ENCODE measurements at regions of chr1 and their contacts with region 1.

Region 1: DNA sequence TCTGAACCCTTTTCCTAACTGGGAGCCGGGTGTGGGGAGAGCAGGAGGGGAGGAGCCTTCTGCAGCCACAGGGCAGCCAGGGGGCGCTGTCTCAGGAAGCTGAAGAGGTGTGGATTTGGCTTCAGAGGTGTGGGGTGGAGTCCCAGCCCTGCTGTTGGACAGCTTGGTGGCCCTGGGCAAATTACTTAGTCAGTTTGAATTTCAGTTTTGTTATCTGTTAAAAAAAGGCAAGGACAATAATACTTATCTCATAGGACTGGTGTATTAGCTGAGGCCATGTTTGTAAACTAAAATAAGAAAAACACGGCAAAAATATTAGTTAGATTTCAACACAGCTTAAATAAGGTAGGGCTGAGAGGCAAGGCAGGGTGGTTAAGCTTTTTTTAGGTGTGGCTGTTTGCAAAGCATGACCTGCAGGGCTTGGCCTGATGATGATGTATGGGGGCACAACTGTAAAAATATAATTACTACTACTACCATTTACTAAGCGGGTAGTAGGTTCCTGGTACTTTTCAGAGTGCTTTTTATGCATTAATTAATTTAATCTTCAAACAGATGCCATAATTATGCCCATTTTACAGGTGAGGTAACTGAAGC is 111.8 kb downstream of the PLXNA2 start:
- H3K4me3 ChIP-seq: no peak overlapping the region
- H3K27ac ChIP-seq: no peak overlapping the region
- H3K4me1 ChIP-seq: peaks cover 20% of the 10 kb centered on the region
- CTCF ChIP-seq: peak; percentile 83

Region 2: DNA sequence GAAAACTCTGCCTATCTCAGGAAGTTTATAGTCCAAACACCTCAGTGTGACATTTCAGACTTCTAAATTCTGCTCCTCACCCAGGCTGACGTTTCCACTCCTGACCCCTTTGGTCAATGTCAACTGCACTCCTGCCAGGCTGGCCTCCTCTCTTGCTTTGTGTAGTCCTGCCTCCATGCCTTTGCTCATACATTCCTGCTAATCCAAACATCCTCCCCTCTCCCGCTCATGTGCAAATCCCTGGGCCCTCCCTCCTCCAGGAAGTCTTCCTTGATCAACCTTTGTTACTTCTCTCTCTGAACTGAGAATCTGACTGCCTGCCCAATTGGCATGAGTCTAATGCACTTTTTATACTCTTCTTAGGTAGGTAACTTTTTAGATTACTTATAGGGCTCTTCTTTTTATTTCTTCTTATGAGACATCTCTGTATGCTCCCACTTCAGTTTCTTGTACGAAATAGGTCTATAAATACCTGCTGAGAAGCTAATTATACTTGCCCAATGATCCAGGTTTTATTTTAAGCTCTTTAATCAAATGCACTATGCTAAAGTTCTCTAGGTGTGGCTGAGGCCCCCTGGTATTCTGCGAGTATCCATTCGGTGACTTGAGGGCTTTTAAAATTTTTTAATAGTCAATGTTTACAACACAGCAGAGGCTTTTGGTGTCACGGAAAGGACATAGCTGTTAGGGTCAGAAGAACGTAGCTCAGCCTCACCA is 16.3 kb before region 1 on chr1:
- CTCF ChIA-PET with region 1: interaction called, 46 read pairs
- POLR2A ChIA-PET with region 1: no interaction called
- H3K4me3 ChIP-seq: no peak overlapping the region
- H3K27ac ChIP-seq: no peak overlapping the region
- H3K4me1 ChIP-seq: no peaks in the 10 kb centered on the region
- CTCF ChIP-seq: no peak

Region 3: DNA sequence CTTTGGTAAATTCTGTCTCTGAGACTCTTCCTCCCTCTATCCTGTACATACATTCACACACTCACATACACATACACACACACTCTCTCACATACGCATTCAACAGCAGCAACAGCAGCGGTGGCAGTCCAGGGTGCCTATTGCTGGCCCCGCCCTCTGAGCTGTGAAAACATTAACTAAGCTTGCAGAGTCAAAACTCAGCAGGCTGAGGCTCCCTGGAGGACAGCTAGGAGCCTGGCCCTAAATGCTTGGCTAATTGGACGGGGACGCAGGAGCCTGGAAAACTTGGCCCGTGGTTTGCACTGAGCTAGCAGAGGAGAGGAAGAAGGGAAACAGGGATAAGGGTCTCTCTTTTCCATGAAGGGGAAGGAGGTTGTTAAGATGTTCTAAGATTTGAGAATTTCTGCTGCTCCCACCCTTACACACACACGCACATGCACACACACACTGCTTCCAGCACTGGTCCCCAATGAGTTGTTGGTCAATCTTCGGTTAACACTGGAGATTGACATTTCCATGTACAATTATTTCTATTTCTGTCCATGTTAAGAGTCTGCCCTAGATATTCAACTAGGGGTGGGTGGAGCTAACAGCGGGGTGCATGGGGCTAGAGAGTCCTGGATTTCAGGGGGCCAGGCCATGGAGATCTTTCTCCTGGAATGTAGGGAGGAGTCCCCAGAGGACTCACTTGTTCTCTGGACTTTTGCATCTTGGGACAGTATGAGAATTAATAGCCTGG is 17.6 kb after region 1 on chr1:
- CTCF ChIA-PET with region 1: interaction called, 22 read pairs
- POLR2A ChIA-PET with region 1: no interaction called
- H3K4me3 ChIP-seq: no peak overlapping the region
- H3K27ac ChIP-seq: no peak overlapping the region; the same call in 1 of the 2 replicates
- H3K4me1 ChIP-seq: peaks cover 3% of the 10 kb centered on the region; the same call in 1 of the 2 replicates
- CTCF ChIP-seq: no peak

Region 4: GRCh38 chr1:208270651-208271111 is 138.3 kb after region 1 on chr1:
- CTCF ChIA-PET with region 1: no interaction called
- POLR2A ChIA-PET with region 1: no interaction called
- H3K4me3 ChIP-seq: no peak overlapping the region
- H3K27ac ChIP-seq: no peak overlapping the region
- H3K4me1 ChIP-seq: peaks cover 18% of the 10 kb centered on the region
- CTCF ChIP-seq: no peak